Activated CD4-positive, alpha-beta T cell treated with anti-CD3 and anti-CD28 coated beads for 36 hours (primary cell): ENCODE measurements at regions of chr22 and their contacts with region 1.

Region 1: GRCh38 chr22:29625090-29625825 is 21.8 kb downstream of the NF2 start:
- DNase-seq: peak; percentile 68
- ATAC-seq: peak; percentile 61
- H3K4me3 Mint-ChIP-seq: no peak overlapping the region
- H3K27ac Mint-ChIP-seq: peak overlapping the region; percentile 14
- H3K4me1 Mint-ChIP-seq: peaks cover 65% of the 10 kb centered on the region
- H3K27me3 Mint-ChIP-seq: no peaks in the 10 kb centered on the region

Region 2: DNA sequence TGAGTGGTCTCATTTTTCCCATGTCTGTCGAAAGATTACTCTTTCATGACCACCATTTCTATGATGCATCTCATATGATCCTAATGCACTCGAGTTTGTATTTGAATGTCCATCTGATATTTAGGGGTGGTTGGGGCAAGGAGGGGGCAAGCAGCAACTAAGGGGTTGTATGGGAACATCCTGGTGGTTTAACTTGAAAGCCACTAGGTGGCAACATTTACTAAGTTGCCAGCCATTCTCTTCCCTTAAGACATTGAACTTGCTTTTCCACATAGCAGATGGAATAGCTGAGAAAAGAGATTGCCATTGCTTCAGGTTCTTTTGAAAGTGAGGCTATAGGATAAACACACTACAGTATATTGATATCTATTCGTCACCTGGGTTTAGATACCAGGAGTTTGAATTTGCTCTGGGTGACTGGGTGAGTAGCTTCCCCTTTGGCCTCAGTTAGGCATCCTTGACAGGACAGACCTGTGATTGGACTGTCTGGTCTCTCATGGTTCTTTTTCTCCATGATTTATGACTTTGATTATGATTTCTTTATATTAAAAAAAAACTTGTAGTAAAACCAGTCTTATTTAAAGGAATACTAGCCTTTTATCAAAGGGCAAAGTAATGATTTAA is 10.6 kb after region 1 on chr22:
- CTCF ChIA-PET with region 1: interaction called, 73 read pairs
- POLR2A ChIA-PET with region 1: interaction called, 4 read pairs
- intact Hi-C with region 1: no loop called
- DNase-seq: no peak
- ATAC-seq: no peak
- H3K4me3 Mint-ChIP-seq: no peak overlapping the region
- H3K27ac Mint-ChIP-seq: no peak overlapping the region
- H3K4me1 Mint-ChIP-seq: peaks cover 18% of the 10 kb centered on the region
- H3K27me3 Mint-ChIP-seq: no peaks in the 10 kb centered on the region